Ascending aorta (tissue), 2 donors: ENCODE measurements at regions of chr11 and their contacts with region 1.

Region 1: GRCh38 chr11:79244241-79244772 is 196.5 kb downstream of the TENM4 start:
- DNase-seq: peak in 1 of 2 donors; percentile 68
- H3K4me3 ChIP-seq: no peak overlapping the region
- H3K27ac ChIP-seq: peak overlapping the region; percentile 78 to 89
- H3K4me1 ChIP-seq: peaks cover 5 to 23% of the 10 kb centered on the region in 2 donors
- H3K27me3 ChIP-seq: no peaks in the 10 kb centered on the region
- CTCF ChIP-seq: no peak

Region 2: DNA sequence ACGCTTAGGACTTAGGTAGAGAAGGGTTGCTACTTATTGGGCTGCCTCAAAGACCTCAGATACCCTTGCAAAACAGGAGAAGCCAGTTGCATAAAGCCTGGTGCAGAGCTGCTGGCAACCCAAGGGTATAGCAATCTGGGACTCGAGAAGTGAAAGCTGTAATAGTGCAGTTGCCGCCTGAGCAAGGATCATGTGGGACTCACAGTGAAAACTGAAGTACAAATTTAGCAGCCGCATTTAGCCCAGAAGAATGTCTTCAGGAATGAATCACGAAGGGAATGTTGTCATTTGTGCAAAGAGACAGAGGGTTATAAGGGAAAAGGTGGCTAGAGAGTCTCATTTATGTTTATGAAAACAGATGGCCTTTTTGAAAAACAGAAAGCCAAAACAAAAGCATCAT is 70.7 kb before region 1 on chr11:
- intact Hi-C with region 1: loop called (anchors 5 kb)
- DNase-seq: peak in 1 of 2 donors; percentile 80
- H3K4me3 ChIP-seq: peak overlapping the region; percentile 12 to 14
- H3K27ac ChIP-seq: peak overlapping the region; percentile 59 to 61
- H3K4me1 ChIP-seq: peaks cover 0 to 11% of the 10 kb centered on the region in 2 donors
- H3K27me3 ChIP-seq: no peaks in the 10 kb centered on the region
- CTCF ChIP-seq: peak in 1 of 3 experiments; percentile 6

Region 3: GRCh38 chr11:79461144-79461543 is 216.8 kb after region 1 on chr11:
- intact Hi-C with region 1: no loop called
- DNase-seq: no peak
- H3K4me3 ChIP-seq: no peak overlapping the region
- H3K27ac ChIP-seq: no peak overlapping the region
- H3K4me1 ChIP-seq: no peaks in the 10 kb centered on the region
- H3K27me3 ChIP-seq: no peaks in the 10 kb centered on the region
- CTCF ChIP-seq: peak in 2 of 3 experiments; percentile 43 to 59